GM12878 (cell line): ENCODE measurements at regions of chr2 and their contacts with region 1.

Region 1: DNA sequence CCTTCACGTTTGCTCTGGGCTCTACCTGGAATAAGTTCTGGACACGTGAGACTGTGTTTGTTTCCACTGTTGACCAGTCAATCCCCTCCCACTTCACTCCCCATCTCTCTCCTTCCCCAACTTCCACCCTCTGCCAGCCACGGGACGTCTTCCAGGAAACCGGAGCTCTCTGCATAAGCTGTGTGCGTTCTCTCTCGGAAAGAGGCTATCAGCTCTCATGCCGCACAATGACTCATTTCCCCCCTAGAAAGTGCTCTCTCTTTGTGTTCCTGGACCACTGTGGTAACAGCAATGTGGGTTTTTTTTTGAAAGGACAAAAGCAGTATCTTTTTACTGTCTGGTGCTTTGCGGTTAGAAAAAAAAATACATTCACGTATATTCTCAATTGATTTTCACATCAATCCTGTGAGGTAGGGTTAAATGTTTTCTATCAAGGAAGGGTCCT is 10.2 kb downstream of the PROKR1 start:
- DNase-seq: peak; percentile 7
- ATAC-seq: peak; percentile 80
- H3K4me3 ChIP-seq: no peak overlapping the region
- H3K27ac ChIP-seq: no peak overlapping the region
- H3K4me1 ChIP-seq: peaks cover 8% of the 10 kb centered on the region
- H3K27me3 ChIP-seq: peaks cover 0 to 4% of the 10 kb centered on the region in 2 experiments; a peak in 2 of 4 replicates
- CTCF ChIP-seq: no peak
- EP300 ChIP-seq: no peak
- POLR2A ChIP-seq: no peak
- RAD21 ChIP-seq: no peak

Region 2: DNA sequence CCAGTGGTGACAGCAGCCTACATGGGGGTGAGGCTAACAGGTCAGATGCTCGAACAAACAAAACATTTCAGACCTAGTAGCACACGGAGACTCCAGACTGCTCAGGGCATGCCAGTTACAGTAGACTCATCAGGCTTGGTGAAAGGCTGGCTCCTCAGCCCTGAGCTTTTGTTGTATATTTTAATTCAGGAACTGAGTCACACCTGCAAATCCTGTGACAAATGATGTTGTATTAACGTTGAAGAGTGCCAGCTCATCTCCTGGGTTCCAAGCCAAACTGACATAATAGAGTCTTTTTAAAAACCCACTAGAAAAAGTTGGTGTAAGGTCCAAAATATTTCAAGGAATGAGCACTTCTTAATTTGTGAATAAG is 656.0 kb before region 1 on chr2:
- CTCF ChIA-PET with region 1: no interaction called
- POLR2A ChIA-PET with region 1: no interaction called
- RAD21 ChIA-PET with region 1: no interaction called
- SMC1A ChIA-PET with region 1: no interaction called
- in situ Hi-C with region 1: no loop called
- intact Hi-C with region 1: no loop called
- DNase-seq: no peak
- ATAC-seq: no peak
- H3K4me3 ChIP-seq: no peak overlapping the region
- H3K27ac ChIP-seq: no peak overlapping the region
- H3K4me1 ChIP-seq: no peaks in the 10 kb centered on the region
- H3K27me3 ChIP-seq: no peaks in the 10 kb centered on the region
- CTCF ChIP-seq: no peak
- EP300 ChIP-seq: no peak
- POLR2A ChIP-seq: no peak
- RAD21 ChIP-seq: no peak

Region 3: GRCh38 chr2:68663371-68664156 is 10.0 kb after region 1 on chr2:
- CTCF ChIA-PET with region 1: no interaction called
- POLR2A ChIA-PET with region 1: no interaction called
- RAD21 ChIA-PET with region 1: no interaction called
- SMC1A ChIA-PET with region 1: no interaction called
- in situ Hi-C with region 1: no loop called
- intact Hi-C with region 1: no loop called
- DNase-seq: no peak
- ATAC-seq: no peak
- H3K4me3 ChIP-seq: no peak overlapping the region
- H3K27ac ChIP-seq: no peak overlapping the region
- H3K4me1 ChIP-seq: no peaks in the 10 kb centered on the region
- H3K27me3 ChIP-seq: no peaks in the 10 kb centered on the region; a peak in 1 of 4 replicates
- CTCF ChIP-seq: no peak
- EP300 ChIP-seq: no peak
- POLR2A ChIP-seq: no peak
- RAD21 ChIP-seq: no peak

Region 4: DNA sequence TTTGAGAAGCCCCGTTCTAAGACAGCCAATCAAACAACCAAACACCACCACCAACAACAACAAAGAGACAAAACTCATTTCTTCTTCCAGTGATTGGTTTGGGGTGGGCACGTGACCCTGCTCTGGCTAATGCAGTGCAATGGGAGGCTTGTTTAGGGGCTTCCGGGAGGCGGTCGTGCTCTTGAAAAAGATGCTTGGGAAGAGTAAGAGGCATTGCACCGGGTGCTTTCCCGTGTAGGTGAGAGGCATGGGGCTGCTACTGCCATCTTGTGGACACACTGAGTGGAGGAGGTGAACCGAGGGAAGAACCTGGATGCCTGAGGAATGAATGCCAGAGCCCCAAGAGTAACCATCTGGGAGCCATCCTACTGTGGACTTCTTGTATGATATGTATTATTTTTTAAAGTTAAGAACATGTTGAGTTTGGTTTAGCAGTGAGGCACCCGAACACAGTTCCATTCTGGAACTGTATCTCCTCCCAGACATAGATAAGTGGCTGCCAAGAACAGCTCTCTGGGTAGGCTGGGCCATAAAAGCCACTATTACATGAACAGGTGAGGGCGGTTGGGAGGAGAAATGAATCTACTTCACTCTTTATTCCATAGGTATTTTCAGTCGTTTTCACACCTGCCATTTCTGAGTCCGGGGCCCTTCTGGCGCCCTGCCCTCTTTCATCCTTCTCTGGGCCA is 61.9 kb after region 1 on chr2:
- CTCF ChIA-PET with region 1: no interaction called
- POLR2A ChIA-PET with region 1: no interaction called
- RAD21 ChIA-PET with region 1: no interaction called
- SMC1A ChIA-PET with region 1: interaction called, 3 read pairs
- in situ Hi-C with region 1: no loop called
- intact Hi-C with region 1: loop called (anchors 5 kb)
- DNase-seq: peak; percentile 59
- ATAC-seq: peak; percentile 90
- H3K4me3 ChIP-seq: 0 out of 2 replicates have a peak overlapping the region, but pooled peaks have one; percentile 16
- H3K27ac ChIP-seq: peak overlapping the region; percentile 66; the same call in 1 of the 2 replicates
- H3K4me1 ChIP-seq: peaks cover 31% of the 10 kb centered on the region
- H3K27me3 ChIP-seq: no peaks in the 10 kb centered on the region
- CTCF ChIP-seq: peak; percentile 74 to 81 (median 77)
- EP300 ChIP-seq: no peak
- POLR2A ChIP-seq: no peak
- RAD21 ChIP-seq: peak; percentile 78